ENCODE measurements at regions of chrX and their contacts with region 1.

Region 1: GRCh38 chrX:81121513-81122382 is 80.0 kb downstream of the HMGN5 start:
- DNase-seq: peak; percentile 89 to 91
- ATAC-seq: peak; percentile 97 to 100 (median 100)
- H3K4me3 ChIP-seq: peak overlapping the region; percentile 37 to 69 (median 62)
- H3K27ac ChIP-seq: peak overlapping the region in 7 of 10 donors; percentile 13 to 58 (median 31)
- H3K4me1 ChIP-seq: peaks cover 0 to 7% (median 0%) of the 10 kb centered on the region in 9 donors
- H3K27me3 ChIP-seq: peaks cover 0 to 60% (median 0%) of the 10 kb centered on the region in 7 donors
- CTCF ChIP-seq: no peak

Region 2: DNA sequence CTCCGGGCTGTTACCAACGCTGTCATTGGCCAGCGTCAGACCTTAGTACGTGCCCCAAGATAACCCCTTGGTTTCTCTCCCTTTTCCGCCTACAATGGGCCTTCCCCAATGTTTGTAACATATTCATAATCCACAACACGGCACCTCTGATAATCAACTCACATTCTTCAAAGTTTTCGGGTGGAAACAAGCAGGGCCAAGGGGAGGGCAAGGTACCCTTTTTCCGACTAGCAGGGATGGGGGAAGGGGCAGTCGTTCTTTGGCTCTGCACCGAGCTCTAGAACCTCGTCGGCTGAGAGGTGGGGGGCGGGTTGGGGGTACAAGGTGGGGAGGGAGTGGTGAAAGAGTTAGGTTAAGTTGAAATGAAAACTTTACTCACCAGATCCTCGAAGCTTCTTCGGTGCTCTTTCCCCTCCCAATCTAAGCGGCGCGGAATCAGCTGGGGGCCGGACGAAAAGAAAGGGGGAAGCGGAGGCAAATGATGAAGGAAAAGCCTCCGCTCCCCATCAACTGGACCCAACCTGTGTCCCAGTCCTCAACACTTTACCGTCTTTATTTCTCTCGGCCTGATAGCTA is 313.5 kb before region 1 on chrX:
- intact Hi-C with region 1: loop called in 1 of 10 experiments (anchors 5 kb)
- DNase-seq: peak; percentile 63 to 79
- ATAC-seq: peak; percentile 77 to 85 (median 83)
- H3K4me3 ChIP-seq: peak overlapping the region; percentile 53 to 71 (median 66)
- H3K27ac ChIP-seq: peak overlapping the region; percentile 65 to 89 (median 85)
- H3K4me1 ChIP-seq: peaks cover 0 to 17% (median 0%) of the 10 kb centered on the region in 9 donors
- H3K27me3 ChIP-seq: no peaks in the 10 kb centered on the region
- CTCF ChIP-seq: no peak

Measured in heart right ventricle (tissue), 16 donors.